CD8-positive, alpha-beta T cell (primary cell): ENCODE measurements at regions of chr3 and their contacts with region 1.

Region 1: GRCh38 chr3:35965908-35966307 is 326.6 kb downstream of the ARPP21 start:
- DNase-seq: peak in 1 of 9 experiments; percentile 3
- ATAC-seq: no peak
- H3K4me3 ChIP-seq: no peak overlapping the region
- H3K4me3 Mint-ChIP-seq: no peak overlapping the region
- H3K27ac ChIP-seq: no peak overlapping the region
- H3K27ac Mint-ChIP-seq: no peak overlapping the region
- H3K4me1 ChIP-seq: no peaks in the 10 kb centered on the region
- H3K4me1 Mint-ChIP-seq: peaks cover 8% of the 10 kb centered on the region
- H3K27me3 ChIP-seq: no peaks in the 10 kb centered on the region
- H3K27me3 Mint-ChIP-seq: no peaks in the 10 kb centered on the region
- CTCF ChIP-seq: peak; percentile 41

Region 2: DNA sequence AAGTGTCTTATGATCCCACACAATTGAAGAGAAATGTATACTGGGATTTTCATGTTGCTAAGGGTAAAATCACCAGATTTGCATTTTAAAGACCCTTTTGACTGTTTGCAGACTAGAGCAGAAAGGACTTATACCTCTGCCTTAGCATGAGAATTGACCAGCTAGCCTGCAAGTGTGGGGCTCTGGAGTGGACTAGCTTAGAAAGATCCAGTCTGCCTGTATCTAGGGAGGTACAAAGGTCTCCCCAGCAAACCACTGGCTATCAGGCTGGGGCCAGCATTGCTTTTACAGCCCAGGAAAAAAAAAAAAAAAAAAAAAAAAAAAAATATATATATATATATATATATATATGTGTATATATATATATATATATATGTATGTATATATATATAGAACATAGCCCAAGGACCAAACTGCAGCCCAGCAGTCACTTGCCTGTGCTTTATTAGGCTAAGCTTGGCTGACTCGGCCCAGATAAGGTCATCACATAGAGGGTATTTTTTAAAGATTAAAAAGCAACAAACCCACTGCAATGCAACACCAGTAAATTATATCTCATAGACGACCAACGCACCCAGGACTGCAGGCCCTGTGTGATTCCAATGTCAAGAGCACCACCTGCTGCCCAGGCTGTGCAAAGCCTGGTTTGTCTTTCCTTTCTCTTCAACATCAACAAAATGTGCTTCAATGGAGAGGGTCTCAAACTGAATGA is 734.8 kb after region 1 on chr3:
- CTCF ChIA-PET with region 1: no interaction called
- POLR2A ChIA-PET with region 1: no interaction called
- intact Hi-C with region 1: loop called in 1 of 2 experiments (anchors 2 kb)
- DNase-seq: peak in 4 of 9 experiments; percentile 10 to 45 (median 25)
- ATAC-seq: no peak
- H3K4me3 ChIP-seq: no peak overlapping the region
- H3K4me3 Mint-ChIP-seq: no peak overlapping the region
- H3K27ac ChIP-seq: no peak overlapping the region
- H3K27ac Mint-ChIP-seq: no peak overlapping the region
- H3K4me1 ChIP-seq: no peaks in the 10 kb centered on the region
- H3K4me1 Mint-ChIP-seq: no peaks in the 10 kb centered on the region
- H3K27me3 ChIP-seq: no peaks in the 10 kb centered on the region
- H3K27me3 Mint-ChIP-seq: no peaks in the 10 kb centered on the region
- CTCF ChIP-seq: peak; percentile 31